Cardiac septum (tissue), 1 donor: ENCODE measurements at regions of chr3 and their contacts with region 1.

Region 1: GRCh38 chr3:71542521-71543370 is 40.8 kb downstream of the FOXP1 start:
- DNase-seq: peak; percentile 92

Region 2: DNA sequence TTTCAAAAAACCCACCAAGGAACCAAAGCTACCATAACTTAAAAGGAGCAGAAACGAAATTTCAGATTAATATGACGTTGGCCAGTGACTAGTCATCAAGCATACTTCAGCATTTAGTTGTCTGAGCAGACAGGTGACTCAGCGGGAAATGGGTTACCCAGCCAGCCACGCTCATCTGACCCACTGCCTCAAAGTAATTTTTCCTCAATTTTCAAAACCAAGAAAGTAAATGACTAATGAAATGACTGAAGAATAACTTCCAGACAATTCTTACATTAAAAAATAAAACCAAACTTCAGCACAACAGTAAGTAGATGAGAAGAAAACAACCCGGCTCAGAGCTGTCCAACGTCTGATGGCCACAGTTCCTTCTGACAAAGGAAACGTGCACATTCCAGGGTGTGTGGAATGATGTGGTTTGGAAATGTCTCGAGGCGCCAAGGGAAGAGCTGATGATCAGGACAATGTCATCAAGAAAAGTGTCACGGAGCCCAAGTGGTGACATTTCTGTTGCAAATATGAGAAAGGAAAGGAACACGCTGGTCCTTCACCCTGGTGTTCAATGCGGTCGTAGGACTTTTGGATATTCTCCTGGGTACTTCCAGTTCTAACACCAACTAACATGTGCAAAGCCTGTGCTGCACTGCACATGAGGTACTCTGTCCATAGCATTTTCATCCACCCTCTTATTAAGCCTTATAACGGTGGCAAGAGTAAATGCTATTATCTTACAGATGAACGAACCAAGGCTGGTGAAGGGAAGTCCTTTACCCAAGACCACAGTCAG is 38.3 kb before region 1 on chr3:
- intact Hi-C with region 1: loop called (anchors 5 kb)
- DNase-seq: no peak